ENCODE measurements at regions of chr5 and their contacts with region 1.

Region 1: DNA sequence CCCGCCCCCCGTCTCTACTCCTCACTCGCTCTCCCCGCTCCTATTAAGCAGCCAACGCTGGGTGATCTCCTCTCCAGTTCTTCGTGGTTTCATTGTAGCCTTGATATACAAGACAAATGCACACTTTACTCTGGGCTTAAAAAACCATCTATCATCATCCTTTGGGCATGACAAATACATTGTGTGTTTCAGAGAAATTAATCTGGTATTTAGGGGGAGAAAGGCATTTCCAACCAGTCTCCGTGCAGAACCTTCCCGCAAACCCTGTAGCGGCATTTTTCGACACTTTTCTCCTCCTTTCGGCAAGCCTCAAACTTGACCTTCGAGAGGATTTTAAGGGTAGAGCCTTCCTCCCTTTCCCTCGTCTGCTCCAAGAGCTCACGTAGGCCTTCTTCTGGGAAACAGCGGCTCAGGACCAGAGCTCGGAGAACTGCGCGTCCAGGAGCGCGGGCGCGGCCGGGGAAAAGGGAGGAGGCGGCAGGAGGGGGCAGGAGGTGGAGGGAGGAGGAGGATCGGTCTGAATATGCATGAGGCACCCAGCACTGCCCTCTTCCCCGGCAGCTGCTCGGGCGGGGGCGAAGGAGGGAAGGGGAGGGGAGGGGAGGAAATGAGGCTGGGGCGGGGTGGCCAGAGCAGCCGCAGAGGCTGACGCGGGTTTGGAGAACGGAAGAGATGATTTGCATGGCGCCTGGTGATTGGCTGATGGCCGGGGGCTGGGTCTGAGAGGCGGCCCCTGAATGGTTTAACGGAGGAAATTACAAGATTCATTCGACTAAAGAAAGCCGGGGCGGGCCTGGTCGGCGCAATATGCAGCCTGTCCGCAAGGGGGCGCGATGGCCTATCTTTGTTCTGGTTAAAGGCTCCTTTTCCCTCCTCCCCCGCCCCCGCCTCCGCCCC is 127.5 kb downstream of the TMEM161B start:
- DNase-seq: peak; percentile 91 to 93
- ATAC-seq: peak; percentile 89 to 91
- H3K4me3 ChIP-seq: peak overlapping the region; percentile 57 to 70 (median 63)
- H3K27ac ChIP-seq: peak overlapping the region in 3 of 4 donors; percentile 34 to 56 (median 38)
- H3K4me1 ChIP-seq: peaks cover 35 to 41% of the 10 kb centered on the region in 2 donors
- H3K27me3 ChIP-seq: peaks cover 76 to 92% (median 81%) of the 10 kb centered on the region in 3 donors
- CTCF ChIP-seq: peak in 4 of 5 experiments; percentile 48 to 74 (median 64)
- POLR2A ChIP-seq: peak; percentile 7 to 37

Region 2: DNA sequence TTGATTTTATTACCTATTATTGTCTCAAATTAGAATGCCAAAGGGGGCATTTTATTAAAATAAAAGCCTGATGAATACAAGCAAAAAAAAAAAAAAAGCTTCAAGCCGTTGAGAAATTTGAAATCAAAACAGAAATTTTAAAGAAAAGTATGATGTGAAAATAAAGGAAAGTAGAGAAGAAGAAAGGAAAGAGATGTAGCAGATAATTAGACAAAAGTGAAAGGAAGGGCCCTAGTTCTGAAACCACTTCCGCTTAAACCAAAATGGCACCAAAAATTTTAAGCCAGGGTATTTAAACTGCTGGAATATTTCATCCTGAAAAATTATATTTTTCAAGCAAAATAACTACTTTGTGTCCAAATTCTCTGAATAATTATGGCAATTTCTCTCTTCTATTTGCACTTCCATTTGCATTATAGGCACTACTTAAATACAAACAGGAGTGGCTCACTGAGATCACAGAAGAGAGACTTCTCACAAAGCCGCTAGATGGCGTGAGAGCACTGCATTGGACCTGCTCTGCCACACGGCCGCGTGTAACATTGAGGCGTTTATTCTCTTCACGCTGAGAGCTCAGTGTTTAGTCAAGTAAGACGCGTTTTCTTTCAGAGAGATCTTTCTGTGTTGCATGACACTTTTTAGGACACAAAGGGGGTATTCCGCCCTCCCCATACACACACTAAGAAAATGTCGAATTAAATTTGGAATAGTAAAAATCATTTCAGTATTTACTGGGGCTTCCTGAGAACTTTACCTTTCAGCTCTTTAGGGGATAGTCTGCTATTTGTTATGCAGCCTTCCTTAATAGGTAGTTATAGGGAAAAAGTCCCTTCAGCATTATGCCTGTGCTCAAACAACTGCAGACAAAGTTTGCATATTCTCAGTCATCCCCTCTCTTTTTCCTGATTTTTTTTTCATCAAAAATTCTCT is 360.0 kb before region 1 on chr5:
- in situ Hi-C with region 1: loop called in 2 of 4 experiments (anchors 25 kb)
- intact Hi-C with region 1: loop called (anchors 10 kb)
- DNase-seq: peak; percentile 41 to 49
- ATAC-seq: peak; percentile 91 to 99
- H3K4me3 ChIP-seq: no peak overlapping the region
- H3K27ac ChIP-seq: no peak overlapping the region
- H3K4me1 ChIP-seq: no peaks in the 10 kb centered on the region
- H3K27me3 ChIP-seq: peaks cover 0 to 23% (median 0%) of the 10 kb centered on the region in 3 donors
- CTCF ChIP-seq: peak; percentile 70 to 94 (median 80)
- POLR2A ChIP-seq: no peak

Region 3: DNA sequence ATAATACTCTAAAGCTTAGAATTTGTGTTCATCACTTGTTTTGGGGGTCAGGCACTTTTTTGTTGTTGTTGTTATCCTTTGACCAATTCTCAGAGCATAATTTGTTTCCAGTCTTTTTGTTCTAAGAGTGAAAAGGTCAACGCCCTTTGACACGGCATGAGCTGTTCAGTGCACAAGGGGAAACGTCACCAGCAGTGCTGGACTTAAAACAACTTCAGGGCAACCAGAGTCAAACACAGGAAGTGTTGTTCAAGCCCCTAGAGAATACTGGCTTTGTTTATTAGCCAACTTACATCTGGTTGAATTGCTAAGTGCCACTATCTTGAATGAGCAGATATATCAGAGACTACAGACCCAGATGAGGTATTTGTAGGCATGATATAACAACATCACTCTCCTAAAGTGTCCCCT is 241.4 kb before region 1 on chr5:
- in situ Hi-C with region 1: no loop called
- intact Hi-C with region 1: loop called (anchors 5 kb)
- DNase-seq: peak; percentile 54 to 67
- ATAC-seq: peak; percentile 86 to 92
- H3K4me3 ChIP-seq: no peak overlapping the region
- H3K27ac ChIP-seq: peak overlapping the region; percentile 32 to 74 (median 66)
- H3K4me1 ChIP-seq: peaks cover 0 to 3% of the 10 kb centered on the region in 2 donors
- H3K27me3 ChIP-seq: no peaks in the 10 kb centered on the region
- CTCF ChIP-seq: no peak
- POLR2A ChIP-seq: no peak

Region 4: GRCh38 chr5:88268385-88269184 is 127.5 kb after region 1 on chr5 and contains the start of gene TMEM161B:
- in situ Hi-C with region 1: no loop called
- intact Hi-C with region 1: loop called (anchors 1 kb)
- DNase-seq: peak; percentile 88 to 93
- ATAC-seq: peak; percentile 96 to 97
- H3K4me3 ChIP-seq: peak within 1 kb of the TSS; percentile 75 to 94 (median 88)
- H3K27ac ChIP-seq: peak within 1 kb of the TSS; percentile 77 to 88 (median 80)
- H3K4me1 ChIP-seq: peaks cover 37% of the 10 kb centered on the region in 2 donors
- H3K27me3 ChIP-seq: no peaks in the 10 kb centered on the region
- CTCF ChIP-seq: no peak
- POLR2A ChIP-seq: peak in 1 of 2 donors; percentile 43
- total RNA-seq, gene TMEM161B: 5.8 to 13.6 (median 6.3) TPM

Region 5: DNA sequence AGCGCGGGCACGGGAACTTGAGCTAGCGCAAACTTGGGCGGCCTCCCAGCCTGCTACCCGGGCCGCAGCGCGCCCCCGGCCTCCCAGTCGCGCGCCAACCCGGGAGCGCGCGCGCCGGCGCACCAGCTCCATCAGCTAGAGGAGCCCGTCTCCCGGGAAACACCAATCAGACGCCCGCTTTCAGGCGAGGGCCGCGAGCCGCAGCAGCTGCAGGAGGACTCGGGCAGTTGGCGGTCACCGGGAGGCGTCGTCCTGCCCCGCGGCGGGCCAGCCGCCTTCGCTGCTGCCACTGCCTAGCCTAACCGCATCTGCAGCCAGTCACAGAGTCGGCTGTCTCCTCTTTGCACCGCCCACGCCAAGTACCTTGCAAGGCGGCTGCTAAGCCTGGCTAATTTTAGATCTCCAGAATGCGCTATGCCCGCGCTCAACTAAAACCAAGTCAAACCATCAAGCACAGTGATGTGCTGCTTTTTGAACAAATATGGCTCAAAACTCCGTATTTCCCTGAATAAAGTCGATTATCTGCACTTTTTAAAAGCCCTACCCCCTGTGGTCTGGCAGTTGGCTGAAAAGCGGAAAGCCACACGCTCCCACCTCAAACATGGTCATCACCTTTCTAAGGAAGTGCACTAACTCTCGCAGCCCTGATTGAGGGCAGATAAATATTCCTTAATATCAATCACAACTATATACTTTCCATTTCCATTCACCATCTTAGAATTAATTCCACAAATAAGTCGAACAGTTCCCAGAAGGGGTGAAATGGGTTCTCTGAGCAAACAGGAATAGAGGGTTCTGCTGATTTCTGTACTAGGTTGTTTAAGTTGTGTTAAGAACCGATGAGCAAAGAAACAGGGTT is 520.1 kb after region 1 on chr5:
- in situ Hi-C with region 1: no loop called
- intact Hi-C with region 1: loop called (anchors 5 kb)
- DNase-seq: peak in 1 of 2 donors; percentile 23
- ATAC-seq: peak in 1 of 2 donors; percentile 49
- H3K4me3 ChIP-seq: peak overlapping the region; percentile 29 to 43 (median 36)
- H3K27ac ChIP-seq: no peak overlapping the region
- H3K4me1 ChIP-seq: peaks cover 7 to 8% of the 10 kb centered on the region in 2 donors
- H3K27me3 ChIP-seq: peaks cover 96 to 100% (median 98%) of the 10 kb centered on the region in 3 donors
- CTCF ChIP-seq: no peak
- POLR2A ChIP-seq: no peak

Region 6: DNA sequence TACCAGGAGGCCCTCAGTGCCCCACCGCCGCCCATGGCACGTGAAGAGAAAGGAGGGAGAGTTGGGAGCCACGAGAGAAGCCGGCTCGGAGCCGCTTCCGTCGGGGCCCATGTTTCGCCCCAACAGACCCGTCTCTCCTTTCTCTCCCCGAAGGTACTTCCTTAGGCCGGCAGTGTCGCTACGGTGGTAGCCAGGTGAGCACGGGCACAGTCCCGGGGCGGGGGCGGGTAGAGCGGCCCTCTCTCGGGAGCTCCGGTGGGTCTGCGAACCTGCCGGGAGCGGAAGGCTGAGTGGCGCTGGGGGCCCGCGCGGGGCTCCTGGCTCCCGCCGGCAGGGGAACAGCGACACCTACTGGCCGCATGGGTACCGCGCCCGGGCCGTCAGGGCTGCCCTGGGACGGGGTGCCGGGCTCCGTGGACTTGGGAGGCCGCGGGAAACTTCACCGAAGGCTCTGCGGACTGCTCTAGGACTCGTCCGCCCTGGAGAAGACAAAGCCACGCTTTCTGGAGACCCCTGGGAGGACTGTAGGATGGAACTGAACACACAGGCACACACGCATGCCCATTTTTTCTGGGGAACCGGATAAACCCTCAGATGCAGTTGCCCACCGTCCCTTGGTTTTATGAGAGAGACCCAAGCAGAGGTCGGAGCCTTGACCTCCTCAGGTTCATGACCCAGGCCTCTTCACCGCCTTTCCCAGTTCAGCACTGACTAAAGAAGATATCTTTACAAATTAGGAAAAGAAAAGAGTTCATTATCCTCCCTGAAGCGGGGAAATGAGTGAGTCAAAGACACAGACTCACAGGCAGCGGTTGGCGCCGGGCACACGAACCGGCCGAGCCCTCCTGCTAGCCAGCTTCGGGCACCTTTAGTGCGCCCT is 539.4 kb after region 1 on chr5:
- in situ Hi-C with region 1: loop called (anchors 10 kb)
- intact Hi-C with region 1: loop called (anchors 5 kb)
- DNase-seq: peak in 1 of 2 donors; percentile 40
- ATAC-seq: peak; percentile 54 to 88
- H3K4me3 ChIP-seq: peak overlapping the region; percentile 40 to 60 (median 47)
- H3K27ac ChIP-seq: no peak overlapping the region
- H3K4me1 ChIP-seq: peaks cover 8 to 15% of the 10 kb centered on the region in 2 donors
- H3K27me3 ChIP-seq: peaks cover 97 to 99% (median 97%) of the 10 kb centered on the region in 3 donors
- CTCF ChIP-seq: peak; percentile 72 to 95 (median 89)
- POLR2A ChIP-seq: no peak

Region 7: GRCh38 chr5:88883059-88883835 is 742.1 kb after region 1 on chr5 and contains the start of gene MEF2C:
- in situ Hi-C with region 1: no loop called
- intact Hi-C with region 1: no loop called
- DNase-seq: peak; percentile 70 to 82
- ATAC-seq: peak; percentile 69 to 73
- H3K4me3 ChIP-seq: peak within 1 kb of the TSS; percentile 59 to 81 (median 70)
- H3K27ac ChIP-seq: peak within 1 kb of the TSS; percentile 86 to 96 (median 94)
- H3K4me1 ChIP-seq: peaks cover 46 to 50% of the 10 kb centered on the region in 2 donors
- H3K27me3 ChIP-seq: no peaks in the 10 kb centered on the region
- CTCF ChIP-seq: no peak
- POLR2A ChIP-seq: peak; percentile 83
- total RNA-seq, gene MEF2C: 63.8 to 192 (median 128) TPM